Activated CD8-positive, alpha-beta T cell treated with anti-CD3 and anti-CD28 coated beads for 36 hours (primary cell): ENCODE measurements at regions of chr12 and their contacts with region 1.

Region 1: GRCh38 chr12:94133964-94134795 is 14.2 kb upstream of the PLXNC1 start:
- DNase-seq: peak; percentile 53
- ATAC-seq: peak; percentile 96
- H3K4me3 Mint-ChIP-seq: no peak overlapping the region
- H3K27ac Mint-ChIP-seq: no peak overlapping the region
- H3K4me1 Mint-ChIP-seq: peaks cover 2% of the 10 kb centered on the region
- H3K27me3 Mint-ChIP-seq: no peaks in the 10 kb centered on the region
- CTCF ChIP-seq: peak; percentile 82

Region 2: DNA sequence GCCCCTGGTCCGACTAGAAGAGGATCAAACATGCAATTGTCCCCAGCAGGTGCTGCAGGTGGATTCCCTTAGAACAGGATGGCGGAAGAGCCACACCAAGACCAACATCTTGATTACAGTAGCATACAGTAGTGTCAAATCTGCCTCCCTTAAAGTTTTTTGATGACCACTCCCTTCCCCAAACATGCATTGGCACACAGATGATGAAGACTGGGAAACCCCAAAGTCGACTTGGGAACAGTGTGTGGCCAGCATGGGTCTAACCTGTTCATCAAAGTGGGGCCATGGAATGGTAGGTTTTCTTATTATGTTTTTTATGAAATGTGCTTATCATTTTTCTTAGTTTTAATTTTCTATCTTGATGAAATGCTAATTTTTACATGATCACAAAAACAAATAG is 23.0 kb after region 1 on chr12:
- CTCF ChIA-PET with region 1: no interaction called
- POLR2A ChIA-PET with region 1: no interaction called
- intact Hi-C with region 1: no loop called
- DNase-seq: no peak
- ATAC-seq: no peak
- H3K4me3 Mint-ChIP-seq: no peak overlapping the region
- H3K27ac Mint-ChIP-seq: no peak overlapping the region
- H3K4me1 Mint-ChIP-seq: peaks cover 12% of the 10 kb centered on the region
- H3K27me3 Mint-ChIP-seq: peaks cover 4% of the 10 kb centered on the region
- CTCF ChIP-seq: no peak

Region 3: GRCh38 chr12:94435511-94435927 is 301.3 kb after region 1 on chr12:
- CTCF ChIA-PET with region 1: interaction called, 12 read pairs
- POLR2A ChIA-PET with region 1: no interaction called
- intact Hi-C with region 1: no loop called
- DNase-seq: no peak
- ATAC-seq: peak; percentile 27
- H3K4me3 Mint-ChIP-seq: no peak overlapping the region
- H3K27ac Mint-ChIP-seq: peak overlapping the region; percentile 14
- H3K4me1 Mint-ChIP-seq: peaks cover 34% of the 10 kb centered on the region
- H3K27me3 Mint-ChIP-seq: no peaks in the 10 kb centered on the region
- CTCF ChIP-seq: no peak

Region 4: DNA sequence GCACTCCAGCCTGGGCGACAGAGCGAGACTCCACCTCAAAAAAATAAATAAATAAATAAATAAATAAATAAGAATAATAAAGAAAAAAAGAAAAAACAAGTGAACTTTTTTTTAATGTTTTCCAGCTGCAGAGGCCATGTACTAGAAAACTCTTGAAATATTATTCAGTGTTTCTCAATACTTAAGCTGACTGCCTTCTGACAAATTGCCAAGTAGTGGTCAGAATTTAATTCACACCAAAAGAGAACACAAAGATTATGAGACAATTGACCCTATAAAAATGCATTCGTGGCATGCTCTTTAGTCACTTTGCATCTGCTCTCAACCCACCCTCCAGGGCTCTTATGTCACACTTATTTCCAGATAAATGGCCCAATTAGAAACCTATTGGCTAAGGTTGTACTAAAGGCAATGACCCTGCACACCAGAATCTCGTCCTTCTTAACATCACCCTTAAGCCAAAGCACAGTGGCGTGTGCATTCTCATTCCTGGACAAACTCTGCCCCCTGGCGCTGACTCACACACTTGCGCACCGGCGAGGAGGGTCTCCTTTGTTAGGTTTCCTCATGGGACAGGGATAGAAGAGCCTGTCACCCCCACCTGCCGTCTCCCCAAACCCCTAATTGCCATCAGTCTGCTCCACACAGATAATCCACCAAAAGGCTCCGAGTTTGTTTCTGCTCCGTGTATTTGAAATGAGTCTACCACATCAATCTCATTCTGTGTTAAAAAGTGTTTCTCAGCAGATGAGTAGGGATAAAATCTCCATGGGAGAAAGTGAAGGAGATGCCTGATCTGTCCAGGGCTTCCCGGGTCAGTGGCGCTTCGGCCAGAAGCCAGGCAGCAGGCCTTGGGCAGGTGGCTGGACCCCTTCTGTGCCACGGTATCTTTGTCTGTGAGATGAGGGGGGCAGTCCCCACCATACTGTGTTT is 398.6 kb after region 1 on chr12:
- CTCF ChIA-PET with region 1: interaction called, 15 read pairs
- POLR2A ChIA-PET with region 1: no interaction called
- intact Hi-C with region 1: loop called (anchors 2 kb)
- DNase-seq: peak; percentile 82
- ATAC-seq: peak; percentile 87
- H3K4me3 Mint-ChIP-seq: no peak overlapping the region
- H3K27ac Mint-ChIP-seq: no peak overlapping the region
- H3K4me1 Mint-ChIP-seq: peaks cover 2% of the 10 kb centered on the region
- H3K27me3 Mint-ChIP-seq: peaks cover 7% of the 10 kb centered on the region
- CTCF ChIP-seq: peak; percentile 79